H1 (cell line): ENCODE measurements at regions of chr20 and their contacts with region 1.

Region 1: DNA sequence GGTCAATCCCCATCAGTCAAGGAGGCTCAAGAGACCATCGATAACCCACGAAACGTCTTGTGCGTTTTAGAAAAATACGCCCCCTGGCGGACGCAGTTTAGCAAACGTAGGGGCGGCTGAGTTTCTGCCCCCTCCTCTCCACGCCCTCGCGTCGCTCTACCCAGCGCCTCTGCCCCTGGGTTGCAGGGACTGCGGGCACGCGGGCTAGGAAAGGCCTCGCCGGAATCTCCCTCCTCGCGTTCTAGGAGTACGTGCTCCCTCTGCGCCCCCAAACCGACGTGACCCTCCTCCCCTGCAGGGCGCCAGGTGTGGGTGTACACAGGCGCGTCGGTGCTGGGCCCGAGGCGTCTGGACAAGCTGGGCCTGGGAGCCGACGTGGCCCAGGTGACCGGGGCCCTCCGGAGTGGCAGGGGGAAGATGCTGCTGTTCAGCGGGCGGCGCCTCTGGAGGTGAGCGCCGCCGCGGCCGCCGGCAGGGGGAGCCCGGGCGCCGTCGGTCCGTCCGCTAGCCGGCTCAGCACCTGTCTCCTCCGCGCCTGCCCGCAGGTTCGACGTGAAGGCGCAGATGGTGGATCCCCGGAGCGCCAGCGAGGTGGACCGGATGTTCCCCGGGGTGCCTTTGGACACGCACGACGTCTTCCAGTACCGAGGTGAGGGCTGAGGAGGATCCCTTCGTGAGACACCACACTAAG is 5.3 kb downstream of the MMP9 start:
- DNase-seq: peak in 1 of 2 experiments; percentile 91
- H3K4me3 ChIP-seq: peak overlapping the region; percentile 23 to 60 (median 38)
- H3K27ac ChIP-seq: 0 out of 2 replicates have a peak overlapping the region, but pooled peaks have one; percentile 4
- H3K4me1 ChIP-seq: peaks cover 0 to 4% (median 2%) of the 10 kb centered on the region in 4 experiments; a peak in 3 of 7 replicates
- H3K27me3 ChIP-seq: peaks cover 0 to 7% (median 5%) of the 10 kb centered on the region in 4 experiments; a peak in 4 of 7 replicates
- CTCF ChIP-seq: peak; percentile 75 to 95 (median 80)
- EP300 ChIP-seq: peak in 1 of 2 experiments; percentile 49; a peak in 1 of 3 replicates
- POLR2A ChIP-seq: peak in 1 of 2 experiments; percentile 45; a peak in 1 of 3 replicates
- RAD21 ChIP-seq: peak; percentile 75 to 84

Region 2: DNA sequence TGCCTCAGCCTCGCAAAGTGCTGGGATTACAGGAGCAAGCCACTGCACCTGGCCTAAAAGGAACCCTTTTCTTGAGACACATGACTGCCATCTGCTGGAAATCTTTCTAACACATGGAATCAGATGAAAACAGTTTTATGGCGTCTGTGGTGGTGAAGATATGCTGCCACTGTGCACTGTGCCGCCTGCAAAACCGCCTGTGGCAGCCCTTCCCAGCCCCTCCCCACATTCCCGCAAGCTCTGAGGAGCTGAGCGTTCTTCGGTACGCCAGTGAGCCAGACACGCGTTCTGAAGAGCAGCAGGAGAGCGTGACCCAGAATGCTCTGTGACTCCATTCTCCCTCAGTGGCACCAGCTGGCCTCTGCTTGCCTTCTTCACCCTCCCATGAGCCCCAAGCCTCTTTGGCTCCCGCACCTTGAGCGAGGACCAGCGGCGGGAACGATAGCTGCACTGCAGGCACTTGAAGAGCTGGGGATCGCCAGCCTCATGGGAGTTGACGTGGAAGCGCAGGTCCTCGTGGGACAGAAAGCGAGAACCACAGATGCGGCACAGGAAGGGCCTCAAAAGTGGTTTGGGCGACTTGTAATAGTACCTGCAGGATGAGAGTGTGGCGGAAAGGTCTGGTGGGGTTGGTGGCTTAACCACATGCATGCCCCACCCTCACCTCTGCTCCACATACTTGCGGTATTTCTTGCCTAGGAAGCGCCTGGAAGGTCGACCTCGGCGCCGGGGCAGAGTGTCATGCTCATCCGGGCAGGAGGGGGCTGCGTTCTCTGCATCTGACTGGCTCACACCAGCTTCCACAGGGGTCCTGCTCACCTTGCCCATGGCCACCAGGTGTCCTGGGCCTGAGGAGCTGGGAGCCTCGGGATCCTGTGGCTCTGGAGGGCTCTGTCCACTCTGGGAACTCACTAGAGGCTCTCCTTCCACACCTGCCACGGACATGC is 50.6 kb before region 1 on chr20:
- CTCF ChIA-PET with region 1: interaction called, 39 read pairs
- POLR2A ChIA-PET with region 1: no interaction called
- DNase-seq: no peak
- H3K4me3 ChIP-seq: no peak overlapping the region
- H3K27ac ChIP-seq: no peak overlapping the region
- H3K4me1 ChIP-seq: no peaks in the 10 kb centered on the region
- H3K27me3 ChIP-seq: no peaks in the 10 kb centered on the region
- CTCF ChIP-seq: peak in 2 of 3 experiments; percentile 37 to 47; a peak in 2 of 4 replicates
- EP300 ChIP-seq: no peak
- POLR2A ChIP-seq: no peak
- RAD21 ChIP-seq: peak; percentile 56 to 66

Region 3: GRCh38 chr20:45987108-45987780 is 26.7 kb before region 1 on chr20:
- CTCF ChIA-PET with region 1: interaction called, 156 read pairs
- POLR2A ChIA-PET with region 1: interaction called, 3 read pairs
- DNase-seq: peak in 1 of 2 experiments; percentile 95
- H3K4me3 ChIP-seq: no peak overlapping the region
- H3K27ac ChIP-seq: no peak overlapping the region
- H3K4me1 ChIP-seq: peaks cover 0 to 8% (median 6%) of the 10 kb centered on the region in 4 experiments; a peak in 5 of 7 replicates
- H3K27me3 ChIP-seq: no peaks in the 10 kb centered on the region
- CTCF ChIP-seq: peak; percentile 90 to 96 (median 95)
- EP300 ChIP-seq: no peak
- POLR2A ChIP-seq: no peak
- RAD21 ChIP-seq: peak; percentile 79 to 89

Region 4: GRCh38 chr20:46028772-46029371 is 14.9 kb after region 1 on chr20 and contains the start of gene SLC12A5:
- CTCF ChIA-PET with region 1: interaction called, 33 read pairs
- POLR2A ChIA-PET with region 1: interaction called, 5 read pairs
- DNase-seq: no peak
- H3K4me3 ChIP-seq: peak within 1 kb of the TSS in 1 of 4 experiments; percentile 46; a peak in 2 of 8 replicates
- H3K27ac ChIP-seq: no peak within 1 kb of the TSS
- H3K4me1 ChIP-seq: peaks cover 0 to 11% (median 7%) of the 10 kb centered on the region in 4 experiments; a peak in 6 of 7 replicates
- H3K27me3 ChIP-seq: peaks cover 48 to 99% (median 72%) of the 10 kb centered on the region in 4 experiments
- CTCF ChIP-seq: no peak
- EP300 ChIP-seq: no peak
- POLR2A ChIP-seq: no peak
- RAD21 ChIP-seq: no peak
- total RNA-seq, gene SLC12A5: 5.9 and 7.3 TPM in 2 replicates

Region 5: DNA sequence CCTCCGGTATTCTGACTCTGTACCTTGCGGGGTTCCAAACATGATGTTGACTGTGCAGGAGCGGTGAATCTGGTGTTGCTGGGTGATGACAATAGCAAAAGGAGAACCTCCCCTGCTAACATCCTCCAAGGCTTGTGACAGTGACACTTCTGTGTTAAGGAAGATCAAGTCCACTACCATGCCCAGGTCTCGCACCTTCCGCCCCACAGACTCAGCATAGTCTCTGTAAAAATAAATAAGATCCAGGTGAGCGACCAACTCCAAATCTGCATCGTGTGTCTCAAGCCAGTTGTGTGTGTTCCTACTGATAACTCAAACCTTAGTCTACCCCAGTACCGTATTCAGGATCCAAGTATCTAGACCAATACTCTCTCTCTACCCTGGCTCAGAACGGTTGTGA is 51.0 kb after region 1 on chr20:
- CTCF ChIA-PET with region 1: interaction called, 17 read pairs
- POLR2A ChIA-PET with region 1: no interaction called
- DNase-seq: peak in 1 of 2 experiments; percentile 19
- H3K4me3 ChIP-seq: no peak overlapping the region
- H3K27ac ChIP-seq: no peak overlapping the region
- H3K4me1 ChIP-seq: no peaks in the 10 kb centered on the region
- H3K27me3 ChIP-seq: no peaks in the 10 kb centered on the region; a peak in 2 of 7 replicates
- CTCF ChIP-seq: no peak
- EP300 ChIP-seq: no peak
- POLR2A ChIP-seq: no peak
- RAD21 ChIP-seq: no peak